Activated CD8-positive, alpha-beta T cell treated with anti-CD3 and anti-CD28 coated beads for 36 hours (primary cell): ENCODE measurements at regions of chr17 and their contacts with region 1.

Region 1: GRCh38 chr17:48593840-48594537 is 410 bp upstream of the HOXB5 start:
- DNase-seq: peak; percentile 86
- ATAC-seq: peak; percentile 78
- H3K4me3 Mint-ChIP-seq: peak overlapping the region; percentile 67
- H3K27ac Mint-ChIP-seq: no peak overlapping the region
- H3K4me1 Mint-ChIP-seq: peaks cover 35% of the 10 kb centered on the region
- H3K27me3 Mint-ChIP-seq: peaks cover 77% of the 10 kb centered on the region
- CTCF ChIP-seq: peak; percentile 88

Region 2: DNA sequence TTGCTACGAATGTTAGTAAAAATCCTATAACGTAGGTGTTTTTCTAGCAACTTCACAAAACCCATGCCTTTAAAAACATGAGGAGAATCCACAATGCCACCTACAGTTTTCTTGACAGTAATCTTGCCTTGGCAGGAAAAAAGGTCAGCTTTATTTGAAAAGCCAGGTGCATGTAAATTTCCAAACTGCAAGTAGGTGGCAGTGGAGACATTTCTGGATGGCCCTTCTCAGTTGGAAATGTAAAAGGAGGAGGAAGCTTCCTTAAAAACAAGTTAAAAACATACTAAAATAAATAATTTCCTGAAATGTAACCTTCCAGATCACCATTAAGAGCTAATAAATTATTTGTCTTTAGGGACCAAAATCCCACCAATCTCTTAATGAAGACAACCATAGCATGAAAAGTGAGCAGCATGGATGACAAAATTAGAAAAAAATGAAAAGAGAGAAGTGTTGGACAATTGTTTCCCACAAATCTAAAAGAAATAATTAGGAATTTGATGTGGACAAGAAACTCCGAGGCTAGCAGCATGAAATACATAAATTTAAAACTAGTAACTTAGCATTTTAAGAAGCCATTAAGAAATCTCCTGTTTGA is 334.2 kb before region 1 on chr17:
- CTCF ChIA-PET with region 1: interaction called, 21 read pairs
- POLR2A ChIA-PET with region 1: no interaction called
- intact Hi-C with region 1: no loop called
- DNase-seq: no peak
- ATAC-seq: no peak
- H3K4me3 Mint-ChIP-seq: no peak overlapping the region
- H3K27ac Mint-ChIP-seq: no peak overlapping the region
- H3K4me1 Mint-ChIP-seq: peaks cover 16% of the 10 kb centered on the region
- H3K27me3 Mint-ChIP-seq: no peaks in the 10 kb centered on the region
- CTCF ChIP-seq: peak; percentile 65

Region 3: DNA sequence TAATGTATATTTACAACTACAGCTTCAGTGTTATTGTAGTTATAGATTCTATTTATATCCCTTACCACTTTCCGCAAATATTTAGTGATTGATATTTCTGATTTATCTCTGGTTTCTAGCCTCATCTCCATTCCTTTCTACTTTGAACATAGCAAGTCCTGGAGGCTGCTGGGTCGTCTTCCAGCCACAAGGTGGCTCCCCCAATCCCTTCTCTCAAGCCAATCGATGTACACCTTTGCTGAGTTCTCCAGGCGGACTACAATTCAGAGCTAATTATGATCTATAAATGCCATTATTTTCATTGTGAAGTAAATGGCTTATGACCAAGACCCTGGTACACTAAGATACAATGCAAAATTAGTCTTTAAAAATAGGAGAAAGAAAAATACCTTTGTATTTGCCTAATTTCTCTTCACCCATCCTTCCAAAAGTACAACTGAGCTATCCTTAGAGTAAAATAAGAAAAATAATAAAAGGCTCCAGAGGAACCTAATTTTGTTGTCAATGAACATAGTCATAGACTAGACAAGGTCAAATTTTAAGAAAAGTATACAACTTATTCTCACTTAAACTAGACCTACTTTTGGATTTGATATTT is 286.1 kb before region 1 on chr17:
- CTCF ChIA-PET with region 1: interaction called, 26 read pairs
- POLR2A ChIA-PET with region 1: no interaction called
- intact Hi-C with region 1: no loop called
- DNase-seq: peak; percentile 69
- ATAC-seq: peak; percentile 82
- H3K4me3 Mint-ChIP-seq: no peak overlapping the region
- H3K27ac Mint-ChIP-seq: no peak overlapping the region
- H3K4me1 Mint-ChIP-seq: peaks cover 30% of the 10 kb centered on the region
- H3K27me3 Mint-ChIP-seq: no peaks in the 10 kb centered on the region
- CTCF ChIP-seq: peak; percentile 71

Region 4: GRCh38 chr17:48344246-48344645 is 249.7 kb before region 1 on chr17:
- CTCF ChIA-PET with region 1: interaction called, 29 read pairs
- POLR2A ChIA-PET with region 1: no interaction called
- intact Hi-C with region 1: no loop called
- DNase-seq: no peak
- ATAC-seq: no peak
- H3K4me3 Mint-ChIP-seq: no peak overlapping the region
- H3K27ac Mint-ChIP-seq: no peak overlapping the region
- H3K4me1 Mint-ChIP-seq: peaks cover 3% of the 10 kb centered on the region
- H3K27me3 Mint-ChIP-seq: no peaks in the 10 kb centered on the region
- CTCF ChIP-seq: no peak

Region 5: GRCh38 chr17:48492401-48493298 is 101.3 kb before region 1 on chr17:
- CTCF ChIA-PET with region 1: interaction called, 29 read pairs
- POLR2A ChIA-PET with region 1: interaction called, 3 read pairs
- intact Hi-C with region 1: no loop called
- DNase-seq: peak; percentile 70
- ATAC-seq: peak; percentile 89
- H3K4me3 Mint-ChIP-seq: peak overlapping the region; percentile 48
- H3K27ac Mint-ChIP-seq: no peak overlapping the region
- H3K4me1 Mint-ChIP-seq: peaks cover 14% of the 10 kb centered on the region
- H3K27me3 Mint-ChIP-seq: peaks cover 26% of the 10 kb centered on the region
- CTCF ChIP-seq: peak; percentile 96

Region 6: GRCh38 chr17:48610282-48611211 is 16.6 kb after region 1 on chr17 and contains the start of gene HOXB7:
- CTCF ChIA-PET with region 1: interaction called, 45 read pairs
- POLR2A ChIA-PET with region 1: interaction called, 4 read pairs
- intact Hi-C with region 1: no loop called
- DNase-seq: peak; percentile 81
- ATAC-seq: peak; percentile 29
- H3K4me3 Mint-ChIP-seq: peak within 1 kb of the TSS; percentile 88
- H3K27ac Mint-ChIP-seq: peak within 1 kb of the TSS; percentile 63
- H3K4me1 Mint-ChIP-seq: peaks cover 30% of the 10 kb centered on the region
- H3K27me3 Mint-ChIP-seq: peaks cover 73% of the 10 kb centered on the region
- CTCF ChIP-seq: no peak
- total RNA-seq, gene HOXB7: 0.50 to 1.0 TPM

Region 7: GRCh38 chr17:48636177-48637018 is 42.4 kb after region 1 on chr17:
- CTCF ChIA-PET with region 1: interaction called, 10 read pairs
- POLR2A ChIA-PET with region 1: no interaction called
- intact Hi-C with region 1: no loop called
- DNase-seq: peak; percentile 89
- ATAC-seq: peak; percentile 95
- H3K4me3 Mint-ChIP-seq: no peak overlapping the region
- H3K27ac Mint-ChIP-seq: no peak overlapping the region
- H3K4me1 Mint-ChIP-seq: peaks cover 6% of the 10 kb centered on the region
- H3K27me3 Mint-ChIP-seq: peaks cover 74% of the 10 kb centered on the region
- CTCF ChIP-seq: peak; percentile 77